PC-9 (cell line): ENCODE measurements at regions of chr17 and their contacts with region 1.

Region 1: GRCh38 chr17:17913695-17914332 is 58.4 kb downstream of the TOM1L2 start:
- DNase-seq: peak; percentile 88 to 89
- H3K4me3 ChIP-seq: no peak overlapping the region
- H3K27ac ChIP-seq: peak overlapping the region; percentile 19
- H3K4me1 ChIP-seq: peaks cover 27% of the 10 kb centered on the region
- H3K27me3 ChIP-seq: no peaks in the 10 kb centered on the region
- CTCF ChIP-seq: no peak

Region 2: GRCh38 chr17:17900615-17901520 is 12.9 kb before region 1 on chr17:
- CTCF ChIA-PET with region 1: interaction called, 11 read pairs
- POLR2A ChIA-PET with region 1: no interaction called
- intact Hi-C with region 1: loop called (anchors 1 kb)
- DNase-seq: peak; percentile 85
- H3K4me3 ChIP-seq: no peak overlapping the region
- H3K27ac ChIP-seq: peak overlapping the region; percentile 63
- H3K4me1 ChIP-seq: peaks cover 36% of the 10 kb centered on the region
- H3K27me3 ChIP-seq: no peaks in the 10 kb centered on the region
- CTCF ChIP-seq: no peak